Thyroid gland (tissue), 4 donors: ENCODE measurements at regions of chr4 and their contacts with region 1.

Region 1: GRCh38 chr4:99117876-99118693 is 26.0 kb downstream of the ADH4 start:
- DNase-seq: no peak
- H3K4me3 ChIP-seq: no peak overlapping the region
- H3K27ac ChIP-seq: no peak overlapping the region
- H3K4me1 ChIP-seq: no peaks in the 10 kb centered on the region
- H3K27me3 ChIP-seq: no peaks in the 10 kb centered on the region
- CTCF ChIP-seq: peak in 3 of 6 experiments; percentile 26 to 54 (median 36)
- POLR2A ChIP-seq: no peak

Region 2: DNA sequence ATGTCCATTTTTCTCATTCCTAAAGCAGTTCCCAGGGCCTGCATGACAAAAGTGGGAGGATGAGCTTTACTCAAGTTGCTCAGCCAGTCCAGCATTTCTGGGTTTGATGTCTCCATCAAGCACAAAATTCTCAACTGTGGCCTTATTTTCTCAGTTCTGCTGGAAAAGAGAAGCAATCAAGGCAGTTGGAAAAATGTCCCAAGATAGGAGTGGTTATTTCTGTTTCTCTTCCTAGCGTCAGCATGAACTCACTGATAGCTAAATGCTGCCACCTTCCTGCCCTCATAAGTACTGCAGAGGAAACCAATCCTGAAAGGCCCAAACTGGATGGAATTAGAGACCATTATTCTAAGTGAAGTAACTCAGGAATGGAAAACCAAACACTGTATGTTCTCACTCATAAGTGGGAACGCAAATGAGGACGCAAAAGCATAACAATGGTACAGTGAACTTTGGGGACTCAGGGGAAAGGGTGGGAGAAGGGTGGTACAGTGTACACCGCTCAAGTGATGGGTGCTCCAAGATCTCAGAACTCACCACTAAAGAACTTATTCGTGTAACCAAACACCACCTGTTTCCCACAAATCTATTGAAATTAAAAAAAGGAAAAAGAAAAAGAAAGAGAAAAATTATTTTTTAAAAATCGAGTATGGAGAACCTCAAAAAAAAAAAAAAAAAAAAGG is 287.5 kb after region 1 on chr4:
- intact Hi-C with region 1: loop called (anchors 10 kb)
- DNase-seq: peak; percentile 69 to 77
- H3K4me3 ChIP-seq: no peak overlapping the region
- H3K27ac ChIP-seq: peak overlapping the region; percentile 2 to 24 (median 10)
- H3K4me1 ChIP-seq: peaks cover 0 to 28% of the 10 kb centered on the region in 2 donors
- H3K27me3 ChIP-seq: no peaks in the 10 kb centered on the region
- CTCF ChIP-seq: peak; percentile 68 to 98 (median 94)
- POLR2A ChIP-seq: no peak

Region 3: DNA sequence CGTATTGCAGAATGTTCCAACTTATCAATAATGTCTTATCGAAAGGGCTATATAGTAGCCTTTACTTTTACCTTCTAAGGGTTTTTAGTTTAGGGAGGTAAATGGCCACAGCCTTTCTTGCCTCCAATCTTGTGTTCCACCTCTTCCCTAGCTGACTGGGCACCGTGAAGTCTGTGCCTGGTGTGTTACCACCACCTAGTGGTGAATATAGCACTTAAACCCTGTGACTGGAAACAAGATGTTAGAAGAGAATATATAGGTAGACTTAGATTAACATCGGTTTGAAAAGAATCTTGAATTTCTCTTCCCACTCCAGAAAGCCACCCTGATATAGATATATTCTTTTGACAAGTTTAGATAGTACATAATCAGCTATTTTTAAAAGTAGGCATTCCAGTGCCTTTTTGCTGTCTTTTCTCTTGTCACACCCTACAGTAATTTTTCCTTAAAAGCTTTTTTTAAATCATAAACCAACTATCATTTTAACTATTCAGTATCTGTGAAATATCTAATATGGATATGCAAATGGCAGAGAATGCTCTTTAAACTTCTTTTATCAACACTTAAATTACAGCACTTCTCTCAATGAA is 344.9 kb after region 1 on chr4:
- intact Hi-C with region 1: loop called (anchors 10 kb)
- DNase-seq: peak; percentile 57 to 68
- H3K4me3 ChIP-seq: no peak overlapping the region
- H3K27ac ChIP-seq: no peak overlapping the region
- H3K4me1 ChIP-seq: no peaks in the 10 kb centered on the region
- H3K27me3 ChIP-seq: no peaks in the 10 kb centered on the region
- CTCF ChIP-seq: peak; percentile 41 to 91 (median 82)
- POLR2A ChIP-seq: no peak